ENCODE measurements at regions of chr17 and their contacts with region 1.

Region 1: GRCh38 chr17:18158022-18158600 is 25.5 kb upstream of the ALKBH5 start:
- DNase-seq: peak; percentile 87 to 97 (median 92)
- ATAC-seq: peak; percentile 79 to 91
- H3K4me3 Mint-ChIP-seq: peak overlapping the region; percentile 78 to 92 (median 86)
- H3K27ac Mint-ChIP-seq: peak overlapping the region; percentile 80 to 96 (median 92)
- H3K4me1 Mint-ChIP-seq: peaks cover 13 to 31% (median 20%) of the 10 kb centered on the region in 4 donors
- H3K27me3 Mint-ChIP-seq: peaks cover 0 to 3% (median 0%) of the 10 kb centered on the region in 5 donors

Region 2: GRCh38 chr17:18183334-18184142 is 25.4 kb after region 1 on chr17 and contains the start of gene ALKBH5:
- POLR2A ChIA-PET with region 1: interaction called, 29 read pairs
- DNase-seq: peak; percentile 95 to 100 (median 98)
- ATAC-seq: peak; percentile 83 to 84
- H3K4me3 Mint-ChIP-seq: peak within 1 kb of the TSS; percentile 92 to 98 (median 96)
- H3K27ac Mint-ChIP-seq: peak within 1 kb of the TSS; percentile 95 to 99 (median 98)
- H3K4me1 Mint-ChIP-seq: peaks cover 25 to 53% (median 50%) of the 10 kb centered on the region in 4 donors
- H3K27me3 Mint-ChIP-seq: peaks cover 0 to 3% (median 0%) of the 10 kb centered on the region in 5 donors
- polyA plus RNA-seq, gene ALKBH5: 125 to 148 (median 129) TPM

Measured in naive thymus-derived CD8-positive, alpha-beta T cell (primary cell).